AG04450 (cell line): ENCODE measurements at regions of chr1 and their contacts with region 1.

Region 1: DNA sequence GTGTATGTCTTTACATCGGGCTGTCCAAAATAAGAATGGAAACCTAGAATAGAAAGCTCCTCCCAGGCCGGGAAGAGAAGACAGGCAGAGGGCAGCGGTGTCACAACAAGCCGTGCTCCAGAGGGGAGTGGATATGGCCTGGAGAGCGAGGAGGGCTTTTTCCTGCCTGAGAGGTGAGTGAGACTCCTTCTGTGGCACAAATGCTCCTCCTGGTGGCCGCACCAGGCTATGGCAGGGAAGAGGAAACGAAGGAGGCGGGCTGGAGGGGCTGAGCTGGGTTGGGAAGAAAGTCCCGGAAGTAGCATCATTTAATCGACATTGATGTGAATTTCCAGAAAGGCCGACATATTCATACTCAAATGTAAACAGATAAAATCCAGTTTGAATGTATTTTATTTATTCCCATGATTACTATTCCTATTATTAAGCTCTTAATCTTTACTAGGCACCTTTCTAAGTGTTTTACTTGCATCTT is 54.7 kb downstream of the MEF2D start:
- DNase-seq: peak; percentile 39
- H3K4me3 ChIP-seq: no peak overlapping the region
- H3K27ac ChIP-seq: no peak overlapping the region
- H3K27me3 ChIP-seq: peaks cover 64% of the 10 kb centered on the region
- CTCF ChIP-seq: peak; percentile 99

Region 2: DNA sequence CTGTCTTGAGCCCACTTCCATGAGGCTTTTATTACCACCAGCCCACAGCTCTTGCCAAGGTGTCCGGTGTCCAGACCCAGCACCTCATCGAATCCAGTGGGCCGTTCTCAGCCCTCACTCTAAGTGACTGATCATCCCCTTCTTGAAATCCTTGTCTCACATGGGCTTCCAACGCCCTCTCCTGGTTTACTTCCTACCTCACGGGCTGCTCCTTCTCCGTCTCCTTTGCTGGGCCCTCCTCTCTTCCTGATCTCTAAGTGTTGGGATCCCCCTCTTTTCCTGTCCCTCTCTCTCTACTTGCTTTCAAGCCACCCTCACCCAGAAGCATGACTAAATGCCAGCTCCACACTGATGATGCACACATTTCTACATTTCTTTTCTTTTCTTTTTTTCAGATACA is 85.9 kb before region 1 on chr1:
- CTCF ChIA-PET with region 1: interaction called, 21 read pairs
- POLR2A ChIA-PET with region 1: no interaction called
- DNase-seq: no peak
- H3K4me3 ChIP-seq: no peak overlapping the region
- H3K27ac ChIP-seq: no peak overlapping the region
- H3K27me3 ChIP-seq: peaks cover 46% of the 10 kb centered on the region
- CTCF ChIP-seq: peak; percentile 59

Region 3: DNA sequence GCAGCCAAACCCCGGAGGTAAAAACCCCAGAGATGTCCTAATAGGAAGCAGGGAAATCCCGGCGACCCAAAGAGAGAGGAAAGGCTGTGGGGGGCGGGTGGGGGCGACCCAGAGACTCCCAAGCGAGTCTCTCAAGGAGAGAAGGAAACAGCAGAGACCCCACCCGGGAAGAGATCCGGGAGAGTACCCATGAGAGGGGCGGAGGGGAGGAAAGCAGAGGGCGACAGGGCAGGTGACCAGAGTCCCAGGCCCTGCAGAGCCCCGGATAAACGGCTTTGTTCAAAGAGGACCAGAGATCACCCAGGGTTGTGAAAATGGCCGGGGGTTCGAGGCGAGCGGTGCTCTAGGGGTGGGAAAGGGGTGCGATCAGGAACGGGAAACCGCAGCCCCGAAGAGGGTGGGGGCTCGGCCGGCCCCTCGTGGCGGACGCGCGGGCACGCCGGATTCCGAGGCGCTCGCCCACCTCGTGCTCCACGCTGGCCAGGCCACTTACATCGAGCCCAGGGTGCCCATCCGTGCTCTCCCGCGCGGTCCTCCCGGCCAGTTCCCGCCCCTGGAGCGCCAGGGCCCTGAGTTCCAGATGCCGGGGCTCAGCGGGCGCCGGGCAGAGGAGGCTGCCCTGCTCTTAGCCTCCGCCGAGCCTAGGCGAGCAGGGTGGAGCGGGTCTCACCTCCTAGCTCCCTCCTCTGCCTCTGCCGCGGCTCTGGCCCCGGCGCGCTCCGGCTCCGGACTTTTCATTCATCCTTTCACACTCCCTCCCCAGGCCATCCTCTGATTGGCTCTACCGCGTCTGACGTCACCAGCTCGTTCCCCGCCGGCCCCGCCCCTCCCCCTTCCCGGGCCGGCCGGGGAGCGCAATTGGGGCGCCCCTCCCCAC is 24.5 kb before region 1 on chr1:
- CTCF ChIA-PET with region 1: interaction called, 12 read pairs
- POLR2A ChIA-PET with region 1: interaction called, 3 read pairs
- DNase-seq: no peak
- H3K4me3 ChIP-seq: no peak overlapping the region; the same call in 1 of the 2 replicates
- H3K27ac ChIP-seq: no peak overlapping the region
- H3K27me3 ChIP-seq: peaks cover 82% of the 10 kb centered on the region
- CTCF ChIP-seq: no peak

Region 4: DNA sequence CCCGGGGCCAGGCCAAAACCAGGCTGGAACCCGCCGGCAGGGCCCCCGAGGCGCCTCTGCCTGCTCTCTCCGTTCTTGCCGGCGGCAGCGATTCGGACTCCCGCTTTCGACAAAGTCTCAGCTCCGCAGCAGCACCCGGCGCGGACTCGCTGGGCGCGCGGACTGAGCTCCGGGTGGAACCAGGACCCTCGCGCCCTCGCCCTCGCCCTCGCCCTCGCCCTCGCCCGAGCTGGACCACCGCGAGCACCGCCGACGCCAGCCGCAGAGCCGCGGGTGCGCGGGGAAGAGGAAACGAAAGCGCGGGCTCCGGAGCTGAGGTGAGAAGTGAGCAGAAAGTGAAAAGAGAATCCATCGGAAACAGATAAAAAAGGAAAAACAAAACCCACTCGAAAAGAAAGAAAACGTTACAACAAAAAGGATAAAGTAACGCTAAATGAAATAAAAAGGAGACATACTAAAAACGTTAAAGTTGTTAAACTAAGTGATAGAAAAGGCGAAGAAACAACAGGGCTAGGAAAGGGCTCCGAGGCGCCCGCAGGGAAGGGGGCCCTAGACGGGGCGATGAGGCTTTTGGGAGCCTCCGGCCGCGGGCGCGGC is 10.2 kb before region 1 on chr1:
- CTCF ChIA-PET with region 1: interaction called, 27 read pairs
- POLR2A ChIA-PET with region 1: no interaction called
- DNase-seq: no peak
- H3K4me3 ChIP-seq: peak overlapping the region; percentile 10; the same call in 1 of the 2 replicates
- H3K27ac ChIP-seq: no peak overlapping the region
- H3K27me3 ChIP-seq: peaks cover 95% of the 10 kb centered on the region
- CTCF ChIP-seq: no peak

Region 5: GRCh38 chr1:156571949-156572662 is 126.3 kb after region 1 on chr1 and contains the start of gene IQGAP3:
- CTCF ChIA-PET with region 1: interaction called, 18 read pairs
- POLR2A ChIA-PET with region 1: no interaction called
- DNase-seq: peak; percentile 47
- H3K4me3 ChIP-seq: peak within 1 kb of the TSS; percentile 75
- H3K27ac ChIP-seq: peak within 1 kb of the TSS; percentile 76
- H3K27me3 ChIP-seq: peaks cover 9% of the 10 kb centered on the region
- CTCF ChIP-seq: no peak
- polyA plus RNA-seq, gene IQGAP3: 6.2 and 6.3 TPM in 2 replicates

Region 6: GRCh38 chr1:156641761-156642264 is 196.0 kb after region 1 on chr1 and contains the start of gene BCAN:
- CTCF ChIA-PET with region 1: no interaction called
- POLR2A ChIA-PET with region 1: no interaction called
- DNase-seq: no peak
- H3K4me3 ChIP-seq: peak within 1 kb of the TSS; percentile 37
- H3K27ac ChIP-seq: no peak within 1 kb of the TSS
- H3K27me3 ChIP-seq: peaks cover 91% of the 10 kb centered on the region
- CTCF ChIP-seq: no peak
- polyA plus RNA-seq, gene BCAN: 0.05 TPM in 1 of 2 replicates, not detected in the other

Region 7: DNA sequence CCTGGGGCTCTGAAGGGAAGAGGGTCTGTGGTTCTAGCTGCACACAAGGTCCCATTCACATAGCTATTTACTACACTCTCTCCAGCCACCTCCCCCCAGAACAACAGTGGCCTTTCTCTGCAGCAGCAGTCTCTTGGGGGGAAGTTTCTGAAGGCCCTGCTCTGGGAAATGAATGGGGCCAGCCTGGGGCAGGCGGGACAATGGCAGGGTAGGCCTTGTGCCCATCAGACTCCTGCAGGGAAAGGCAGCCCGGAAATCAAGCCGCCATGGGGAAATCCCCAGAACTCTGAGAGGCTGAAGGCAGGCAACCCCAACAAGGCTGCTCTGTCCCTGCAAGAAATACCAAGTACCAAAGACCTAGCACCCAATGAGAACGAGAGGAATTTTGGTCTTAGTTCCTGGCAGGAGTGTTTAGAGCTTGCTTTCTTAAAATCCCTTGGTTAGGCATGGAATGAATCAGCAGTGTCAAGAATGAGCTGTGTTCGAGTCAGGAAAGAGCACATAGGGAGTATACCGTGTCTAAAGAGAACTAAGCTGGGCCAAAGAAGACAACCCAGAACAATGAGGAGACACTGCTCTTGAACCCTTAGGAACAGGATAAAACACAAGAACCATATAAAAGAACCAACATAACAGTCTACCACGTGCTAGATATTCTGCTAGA is 588.4 kb after region 1 on chr1:
- CTCF ChIA-PET with region 1: no interaction called
- POLR2A ChIA-PET with region 1: no interaction called
- DNase-seq: no peak
- H3K4me3 ChIP-seq: no peak overlapping the region
- H3K27ac ChIP-seq: no peak overlapping the region
- H3K27me3 ChIP-seq: no peaks in the 10 kb centered on the region
- CTCF ChIP-seq: no peak